Activated CD8-positive, alpha-beta T cell treated with anti-CD3 and anti-CD28 coated beads for 36 hours (primary cell): ENCODE measurements at regions of chr2 and their contacts with region 1.

Region 1: DNA sequence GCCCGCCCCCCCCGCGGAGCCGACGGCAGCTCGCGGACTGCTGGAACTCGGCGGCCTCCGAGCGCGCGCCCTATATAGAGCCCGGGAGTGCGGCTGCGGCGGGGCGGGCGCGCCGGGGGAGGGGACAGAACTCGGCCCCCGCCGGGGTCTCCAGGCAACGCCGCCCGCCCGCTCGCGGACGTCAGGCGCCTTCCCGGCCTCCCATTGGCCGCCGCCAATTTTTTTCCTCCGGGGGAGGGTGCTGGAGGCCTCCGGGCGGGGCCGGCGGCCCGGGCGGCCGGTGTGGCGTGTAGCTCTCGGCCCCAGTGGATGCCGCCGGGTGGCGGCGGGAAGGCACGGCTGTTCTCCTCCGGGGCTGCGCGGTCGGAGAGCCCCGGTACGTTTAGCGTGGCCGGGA is at the start of gene ZFP36L2:
- DNase-seq: peak; percentile 95
- ATAC-seq: peak; percentile 72
- H3K4me3 Mint-ChIP-seq: peak within 1 kb of the TSS; percentile 94
- H3K27ac Mint-ChIP-seq: peak within 1 kb of the TSS; percentile 95
- H3K4me1 Mint-ChIP-seq: peaks cover 34% of the 10 kb centered on the region
- H3K27me3 Mint-ChIP-seq: no peaks in the 10 kb centered on the region
- CTCF ChIP-seq: no peak
- total RNA-seq, gene ZFP36L2: 102 to 106 TPM

Region 2: GRCh38 chr2:42314892-42315467 is 911.6 kb before region 1 on chr2:
- CTCF ChIA-PET with region 1: no interaction called
- POLR2A ChIA-PET with region 1: no interaction called
- intact Hi-C with region 1: no loop called
- DNase-seq: no peak
- ATAC-seq: no peak
- H3K4me3 Mint-ChIP-seq: no peak overlapping the region
- H3K27ac Mint-ChIP-seq: peak overlapping the region; percentile 32
- H3K4me1 Mint-ChIP-seq: peaks cover 24% of the 10 kb centered on the region
- H3K27me3 Mint-ChIP-seq: no peaks in the 10 kb centered on the region
- CTCF ChIP-seq: no peak

Region 3: DNA sequence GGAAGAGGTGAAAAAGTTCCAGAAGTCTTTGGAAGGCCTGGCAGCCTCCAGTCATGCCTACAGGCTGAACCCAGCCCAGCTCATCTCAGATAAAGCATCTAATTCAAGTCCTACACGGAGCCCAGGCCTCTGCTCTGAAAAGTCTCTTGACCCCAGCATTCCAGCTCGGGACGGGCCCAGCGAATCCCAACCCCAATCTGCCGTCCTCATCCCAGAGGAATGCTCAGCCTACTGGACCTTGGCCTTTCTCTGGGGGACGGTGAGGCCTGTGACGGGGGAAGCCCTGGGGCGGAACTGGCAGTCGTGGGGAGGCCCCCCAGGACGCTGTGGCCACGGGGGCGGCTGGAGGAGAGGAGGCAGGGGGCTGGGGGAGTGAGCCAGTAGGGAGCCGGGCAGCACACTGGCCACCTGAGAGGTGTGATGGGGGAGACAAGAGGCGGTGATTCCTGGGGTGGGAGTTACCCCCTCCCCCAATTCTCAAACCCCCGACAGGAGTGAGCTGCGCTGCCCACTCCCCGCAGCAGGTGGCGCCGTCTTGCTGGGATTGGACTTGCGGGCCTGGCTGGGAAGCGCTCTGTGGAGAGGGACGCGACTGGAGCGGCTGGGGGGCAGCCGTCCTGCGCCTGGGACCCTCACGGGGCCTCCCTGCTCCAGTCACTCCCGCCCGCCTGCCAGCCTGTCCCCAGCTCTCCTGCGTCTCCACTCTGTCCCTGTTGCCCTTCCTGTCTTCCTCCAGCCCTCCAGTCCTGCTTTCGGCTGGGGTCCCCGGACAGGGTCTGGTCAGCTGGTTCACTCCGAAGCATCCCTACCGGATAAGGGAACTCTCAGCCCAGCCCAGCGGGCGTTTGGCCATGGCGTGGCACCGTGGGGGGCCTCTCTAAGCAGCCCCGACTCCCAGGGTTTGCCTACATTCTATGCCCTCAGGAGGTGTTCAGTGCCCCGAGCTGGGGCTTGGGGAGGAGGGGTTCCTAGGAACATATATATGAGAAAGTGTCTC is 251.5 kb before region 1 on chr2:
- CTCF ChIA-PET with region 1: interaction called, 63 read pairs
- POLR2A ChIA-PET with region 1: interaction called, 3 read pairs
- intact Hi-C with region 1: loop called (anchors 10 kb)
- DNase-seq: peak; percentile 64
- ATAC-seq: peak; percentile 75
- H3K4me3 Mint-ChIP-seq: no peak overlapping the region
- H3K27ac Mint-ChIP-seq: no peak overlapping the region
- H3K4me1 Mint-ChIP-seq: peaks cover 16% of the 10 kb centered on the region
- H3K27me3 Mint-ChIP-seq: no peaks in the 10 kb centered on the region
- CTCF ChIP-seq: peak; percentile 85

Region 4: DNA sequence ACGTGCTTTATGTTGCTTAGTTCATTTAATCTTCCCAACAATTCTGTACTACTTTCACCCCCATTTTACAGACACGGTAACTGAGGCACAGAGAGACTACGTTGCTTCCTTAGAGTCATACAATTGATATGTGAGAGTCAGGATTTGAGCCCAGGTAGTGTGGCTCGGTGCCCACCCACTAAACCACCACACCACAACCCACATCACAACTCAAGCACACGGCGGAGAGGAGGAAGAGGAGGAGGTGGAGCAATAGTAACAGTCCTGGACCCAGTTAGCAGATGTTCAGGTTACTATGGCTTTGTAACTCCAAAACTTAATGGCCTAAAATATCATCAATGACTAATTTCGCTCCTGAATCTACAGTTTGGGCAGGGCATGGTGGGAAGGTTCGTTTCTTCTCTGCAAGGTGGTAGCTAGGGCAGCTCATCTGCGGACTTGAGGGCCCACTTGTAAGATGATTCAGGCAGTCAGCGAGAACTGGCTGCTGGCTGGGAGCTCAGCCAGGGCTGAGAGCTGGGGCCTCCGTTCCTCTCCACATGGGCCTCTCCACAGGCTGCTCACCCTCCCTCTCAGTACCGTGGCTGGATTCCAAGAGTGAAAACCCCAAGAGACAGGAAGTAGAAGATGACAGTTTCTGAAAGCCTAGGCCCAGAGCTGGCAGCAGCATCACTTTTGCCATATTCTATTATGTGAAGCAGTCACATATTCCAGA is 167.2 kb before region 1 on chr2:
- CTCF ChIA-PET with region 1: interaction called, 14 read pairs
- POLR2A ChIA-PET with region 1: interaction called, 3 read pairs
- intact Hi-C with region 1: no loop called
- DNase-seq: peak; percentile 89
- ATAC-seq: peak; percentile 95
- H3K4me3 Mint-ChIP-seq: no peak overlapping the region
- H3K27ac Mint-ChIP-seq: peak overlapping the region; percentile 79
- H3K4me1 Mint-ChIP-seq: peaks cover 30% of the 10 kb centered on the region
- H3K27me3 Mint-ChIP-seq: no peaks in the 10 kb centered on the region
- CTCF ChIP-seq: no peak

Region 5: DNA sequence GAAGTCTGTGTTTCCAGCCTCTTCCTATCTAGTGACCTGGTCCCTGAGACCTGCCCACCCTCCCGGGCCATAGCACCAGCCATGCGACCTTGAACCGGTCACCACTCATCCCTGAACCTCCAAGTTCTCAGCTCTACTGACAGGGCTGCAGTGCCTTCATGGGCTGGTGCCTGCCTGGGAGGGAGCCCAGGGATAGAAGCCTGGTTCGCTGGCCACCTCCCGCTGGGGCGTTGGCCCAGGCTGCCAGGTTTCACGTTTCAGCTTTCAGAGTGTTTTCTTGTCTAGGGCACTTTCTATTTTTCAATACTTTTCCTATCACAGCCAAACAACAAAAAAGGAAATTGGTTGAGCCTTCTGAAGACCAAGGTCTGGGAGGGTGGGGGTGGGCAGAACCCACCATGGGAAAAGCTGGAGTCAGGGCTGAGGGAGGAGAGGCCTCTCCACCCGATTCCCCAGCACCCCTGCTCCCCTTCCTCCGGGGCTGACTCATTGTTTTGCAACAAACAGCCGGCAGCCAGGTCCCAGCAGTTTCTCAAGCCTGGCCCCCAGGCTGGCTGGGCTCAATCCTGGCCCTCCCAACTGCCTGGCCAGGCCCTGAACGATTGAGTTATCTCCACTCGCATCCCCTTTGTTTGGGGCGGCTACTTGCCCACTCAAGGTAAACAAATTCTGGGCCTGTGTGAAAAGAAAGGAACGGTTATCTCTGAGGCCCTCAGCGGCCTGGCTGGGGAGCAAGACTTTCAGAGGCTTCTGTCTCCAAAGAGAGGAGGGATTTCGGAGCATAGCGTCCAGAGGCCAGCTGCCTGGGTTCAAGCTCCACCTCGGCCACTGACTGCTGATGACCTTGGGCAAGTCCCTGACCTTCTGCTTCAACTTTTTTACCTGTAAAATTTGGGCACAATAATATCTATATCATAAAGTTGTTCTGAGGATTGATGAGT is 47.7 kb before region 1 on chr2:
- CTCF ChIA-PET with region 1: interaction called, 11 read pairs
- POLR2A ChIA-PET with region 1: interaction called, 252 read pairs
- intact Hi-C with region 1: no loop called
- DNase-seq: no peak
- ATAC-seq: no peak
- H3K4me3 Mint-ChIP-seq: no peak overlapping the region
- H3K27ac Mint-ChIP-seq: peak overlapping the region; percentile 46
- H3K4me1 Mint-ChIP-seq: peaks cover 60% of the 10 kb centered on the region
- H3K27me3 Mint-ChIP-seq: no peaks in the 10 kb centered on the region
- CTCF ChIP-seq: no peak

Region 6: GRCh38 chr2:43484323-43484930 is 257.9 kb after region 1 on chr2:
- CTCF ChIA-PET with region 1: interaction called, 41 read pairs
- POLR2A ChIA-PET with region 1: interaction called, 3 read pairs
- intact Hi-C with region 1: loop called (anchors 5 kb)
- DNase-seq: no peak
- ATAC-seq: peak; percentile 61
- H3K4me3 Mint-ChIP-seq: no peak overlapping the region
- H3K27ac Mint-ChIP-seq: no peak overlapping the region
- H3K4me1 Mint-ChIP-seq: peaks cover 6% of the 10 kb centered on the region
- H3K27me3 Mint-ChIP-seq: no peaks in the 10 kb centered on the region
- CTCF ChIP-seq: peak; percentile 82